AG04450 (cell line): ENCODE measurements at regions of chr12 and their contacts with region 1.

Region 1: GRCh38 chr12:122399592-122400373 is 22.7 kb downstream of the CLIP1 start:
- DNase-seq: peak; percentile 75
- H3K4me3 ChIP-seq: peak overlapping the region; percentile 24; the same call in 1 of the 2 replicates
- H3K27ac ChIP-seq: peak overlapping the region; percentile 99
- H3K27me3 ChIP-seq: no peaks in the 10 kb centered on the region
- CTCF ChIP-seq: peak; percentile 80

Region 2: DNA sequence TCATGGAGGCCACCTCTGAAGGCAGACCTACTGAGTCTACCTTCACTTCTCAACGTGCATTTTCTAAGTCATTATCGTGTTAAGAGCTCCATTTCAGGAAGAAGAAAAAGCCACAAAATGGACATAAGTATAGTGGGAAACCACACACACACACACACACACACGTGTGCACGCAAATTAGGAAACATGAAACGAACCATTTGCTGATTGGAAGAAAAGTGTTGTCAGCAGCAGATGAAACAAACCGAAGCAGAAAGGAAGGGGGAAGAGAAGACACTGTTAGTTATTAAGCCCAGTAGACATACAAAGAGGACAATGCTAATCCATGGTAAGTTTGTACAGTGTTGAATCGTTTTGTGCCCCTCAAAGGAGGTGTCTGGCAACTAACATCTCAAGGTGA is 123.5 kb before region 1 on chr12:
- CTCF ChIA-PET with region 1: no interaction called
- POLR2A ChIA-PET with region 1: no interaction called
- DNase-seq: no peak
- H3K4me3 ChIP-seq: no peak overlapping the region
- H3K27ac ChIP-seq: no peak overlapping the region
- H3K27me3 ChIP-seq: no peaks in the 10 kb centered on the region
- CTCF ChIP-seq: no peak

Region 3: DNA sequence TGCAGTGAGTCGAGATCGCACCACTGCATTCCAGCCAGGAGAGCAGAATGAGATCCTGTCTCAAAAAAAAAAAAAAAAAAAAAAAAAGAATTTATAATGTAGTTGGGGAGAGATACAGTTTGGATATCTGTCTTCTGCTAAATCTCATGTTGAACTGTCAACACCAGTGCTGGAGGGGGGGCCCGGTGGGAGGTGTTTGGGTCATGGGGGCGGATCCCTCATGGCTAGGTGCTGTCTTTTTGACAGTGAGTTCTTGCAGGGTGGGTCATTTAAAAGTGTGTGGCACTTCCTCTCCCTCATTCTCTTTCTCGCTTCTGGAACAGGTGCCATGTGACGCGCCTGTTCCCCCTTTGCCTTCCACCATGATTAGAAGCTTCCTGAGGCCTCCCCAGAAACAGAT is 10.1 kb before region 1 on chr12:
- CTCF ChIA-PET with region 1: interaction called, 10 read pairs
- POLR2A ChIA-PET with region 1: interaction called, 3 read pairs
- DNase-seq: no peak
- H3K4me3 ChIP-seq: no peak overlapping the region
- H3K27ac ChIP-seq: no peak overlapping the region
- H3K27me3 ChIP-seq: no peaks in the 10 kb centered on the region
- CTCF ChIP-seq: no peak

Region 4: GRCh38 chr12:122449353-122449752 is 49.6 kb after region 1 on chr12:
- CTCF ChIA-PET with region 1: interaction called, 6 read pairs
- POLR2A ChIA-PET with region 1: interaction called, 18 read pairs
- DNase-seq: peak; percentile 81
- H3K4me3 ChIP-seq: no peak overlapping the region
- H3K27ac ChIP-seq: peak overlapping the region; percentile 47
- H3K27me3 ChIP-seq: no peaks in the 10 kb centered on the region
- CTCF ChIP-seq: 0 out of 2 replicates have a peak, but pooled peaks have one; percentile 8

Region 5: GRCh38 chr12:122500685-122501488 is 101.1 kb after region 1 on chr12 and contains the start of gene ZCCHC8:
- CTCF ChIA-PET with region 1: interaction called, 26 read pairs
- POLR2A ChIA-PET with region 1: interaction called, 15 read pairs
- DNase-seq: peak; percentile 95
- H3K4me3 ChIP-seq: peak within 1 kb of the TSS; percentile 85
- H3K27ac ChIP-seq: peak within 1 kb of the TSS; percentile 97
- H3K27me3 ChIP-seq: no peaks in the 10 kb centered on the region
- CTCF ChIP-seq: peak; percentile 16; the same call in 1 of the 2 replicates
- polyA plus RNA-seq, gene ZCCHC8: 13.0 and 16.6 TPM in 2 replicates